Ascending aorta (tissue), 2 donors: ENCODE measurements at regions of chr3 and their contacts with region 1.

Region 1: DNA sequence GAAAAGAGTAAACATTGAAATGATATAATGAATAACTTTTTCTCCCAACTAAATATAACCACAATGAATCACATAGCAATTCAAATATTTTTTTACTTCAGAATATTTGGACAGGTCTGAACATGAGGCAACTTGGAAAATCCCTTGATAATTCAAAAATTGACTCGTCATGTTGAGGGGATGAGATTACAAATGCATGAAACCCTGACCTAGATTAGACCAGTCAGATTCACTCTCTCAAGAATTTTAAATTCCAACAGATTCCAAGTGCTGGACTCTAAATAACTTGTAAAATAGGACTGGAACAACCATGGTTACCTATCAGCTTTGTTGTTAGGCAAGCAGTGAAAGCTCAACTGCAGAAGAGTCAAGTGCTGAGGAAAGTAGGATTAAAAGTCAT is 317.5 kb downstream of the GBE1 start:
- DNase-seq: no peak
- H3K4me3 ChIP-seq: no peak overlapping the region
- H3K27ac ChIP-seq: peak overlapping the region; percentile 24 to 77
- H3K4me1 ChIP-seq: peaks cover 3 to 13% of the 10 kb centered on the region in 2 donors
- H3K27me3 ChIP-seq: no peaks in the 10 kb centered on the region
- CTCF ChIP-seq: no peak

Region 2: GRCh38 chr3:81336470-81336869 is 107.5 kb before region 1 on chr3:
- intact Hi-C with region 1: no loop called
- DNase-seq: no peak
- H3K4me3 ChIP-seq: no peak overlapping the region
- H3K27ac ChIP-seq: no peak overlapping the region
- H3K4me1 ChIP-seq: no peaks in the 10 kb centered on the region
- H3K27me3 ChIP-seq: no peaks in the 10 kb centered on the region
- CTCF ChIP-seq: no peak

Region 3: DNA sequence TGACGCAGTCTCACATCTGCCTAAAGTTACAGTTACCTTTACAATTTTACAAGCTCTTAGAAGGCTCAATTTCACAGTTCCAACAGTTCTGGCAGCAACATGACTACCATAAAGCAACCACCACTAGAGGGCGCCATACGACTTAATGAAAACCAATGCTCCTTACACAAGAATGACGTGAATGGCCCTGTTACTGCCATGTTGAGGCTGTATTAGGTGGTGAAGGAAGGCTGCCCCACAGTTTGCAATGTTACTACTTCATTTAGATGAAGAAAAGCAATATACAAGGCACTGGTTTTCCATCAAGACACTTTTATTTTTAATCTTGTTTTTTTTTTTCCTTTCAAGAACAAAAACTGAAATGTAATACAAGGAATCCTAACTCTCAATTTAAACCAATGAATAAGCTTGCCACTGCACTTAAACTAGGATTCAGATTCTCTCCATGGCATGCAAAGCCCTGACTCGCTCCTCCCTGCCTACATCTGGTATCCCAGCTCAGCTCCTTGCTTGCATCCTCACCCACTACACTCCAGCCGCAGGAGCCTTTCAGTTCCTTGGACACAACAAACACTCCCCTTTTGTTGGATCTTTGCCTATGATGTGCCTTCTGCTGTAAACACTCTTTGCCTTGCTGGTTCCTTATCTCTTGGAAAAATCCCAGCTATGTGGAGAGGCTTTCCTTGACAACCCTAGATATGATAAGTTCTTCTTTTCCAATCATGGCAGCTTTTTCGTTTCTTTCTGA is 46.8 kb after region 1 on chr3:
- intact Hi-C with region 1: loop called (anchors 5 kb)
- DNase-seq: peak; percentile 14 to 90
- H3K4me3 ChIP-seq: no peak overlapping the region
- H3K27ac ChIP-seq: peak overlapping the region; percentile 69 to 72
- H3K4me1 ChIP-seq: peaks cover 0 to 8% of the 10 kb centered on the region in 2 donors
- H3K27me3 ChIP-seq: no peaks in the 10 kb centered on the region
- CTCF ChIP-seq: peak; percentile 53 to 65 (median 55)

Region 4: GRCh38 chr3:81581966-81582599 is 138.1 kb after region 1 on chr3:
- intact Hi-C with region 1: no loop called
- DNase-seq: no peak
- H3K4me3 ChIP-seq: no peak overlapping the region
- H3K27ac ChIP-seq: no peak overlapping the region
- H3K4me1 ChIP-seq: no peaks in the 10 kb centered on the region
- H3K27me3 ChIP-seq: no peaks in the 10 kb centered on the region
- CTCF ChIP-seq: peak in 2 of 3 experiments; percentile 37 to 51